Calu3 (cell line): ENCODE measurements at regions of chr2 and their contacts with region 1.

Region 1: DNA sequence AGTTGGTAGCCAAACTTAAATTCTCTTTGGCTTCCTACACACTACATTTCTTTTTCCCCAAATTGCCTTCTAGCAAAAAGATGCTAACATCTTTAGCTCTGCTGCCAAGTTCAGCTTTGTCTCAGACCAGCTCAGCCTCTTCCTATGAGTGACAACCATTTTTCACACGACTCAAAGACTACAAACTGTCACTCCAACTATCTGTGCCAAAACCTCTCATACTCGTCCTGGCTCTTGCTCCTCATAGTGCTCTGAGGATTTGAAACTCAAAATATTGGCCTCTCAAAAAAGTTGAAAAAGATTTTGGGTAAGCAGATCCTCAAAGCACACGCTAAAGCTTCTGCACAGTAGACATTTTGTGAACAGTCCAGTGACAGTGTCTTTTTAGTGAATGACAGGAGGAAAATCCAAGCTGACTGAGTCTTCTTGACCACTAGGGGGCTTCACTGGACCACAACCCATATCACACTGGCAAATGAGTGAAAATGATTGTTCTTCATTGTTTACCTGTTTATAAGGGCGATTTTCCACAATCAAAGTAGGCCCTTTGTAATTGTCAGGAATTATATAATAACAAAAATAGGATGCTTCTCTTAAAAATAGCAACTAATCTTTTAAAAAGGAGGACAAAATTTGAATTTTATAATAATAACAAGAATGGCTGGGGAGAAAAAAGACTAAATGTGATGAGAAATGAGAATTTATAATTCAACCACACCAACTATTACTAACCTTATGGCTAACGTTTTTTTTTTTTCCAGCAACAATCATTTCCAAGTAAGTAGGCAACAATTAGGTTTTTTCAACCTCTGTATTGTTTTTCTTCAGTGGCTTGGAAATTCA is 85.5 kb upstream of the PGAP1 start:
- DNase-seq: peak; percentile 24
- H3K4me3 Mint-ChIP-seq: no peak overlapping the region
- H3K27ac Mint-ChIP-seq: no peak overlapping the region
- H3K4me1 Mint-ChIP-seq: peaks cover 8% of the 10 kb centered on the region
- H3K27me3 Mint-ChIP-seq: no peaks in the 10 kb centered on the region
- CTCF ChIP-seq: peak; percentile 87

Region 2: GRCh38 chr2:196767101-196767500 is 244.9 kb before region 1 on chr2:
- CTCF ChIA-PET with region 1: no interaction called
- intact Hi-C with region 1: no loop called
- DNase-seq: no peak
- H3K4me3 Mint-ChIP-seq: no peak overlapping the region
- H3K27ac Mint-ChIP-seq: no peak overlapping the region
- H3K4me1 Mint-ChIP-seq: no peaks in the 10 kb centered on the region
- H3K27me3 Mint-ChIP-seq: no peaks in the 10 kb centered on the region
- CTCF ChIP-seq: no peak

Region 3: DNA sequence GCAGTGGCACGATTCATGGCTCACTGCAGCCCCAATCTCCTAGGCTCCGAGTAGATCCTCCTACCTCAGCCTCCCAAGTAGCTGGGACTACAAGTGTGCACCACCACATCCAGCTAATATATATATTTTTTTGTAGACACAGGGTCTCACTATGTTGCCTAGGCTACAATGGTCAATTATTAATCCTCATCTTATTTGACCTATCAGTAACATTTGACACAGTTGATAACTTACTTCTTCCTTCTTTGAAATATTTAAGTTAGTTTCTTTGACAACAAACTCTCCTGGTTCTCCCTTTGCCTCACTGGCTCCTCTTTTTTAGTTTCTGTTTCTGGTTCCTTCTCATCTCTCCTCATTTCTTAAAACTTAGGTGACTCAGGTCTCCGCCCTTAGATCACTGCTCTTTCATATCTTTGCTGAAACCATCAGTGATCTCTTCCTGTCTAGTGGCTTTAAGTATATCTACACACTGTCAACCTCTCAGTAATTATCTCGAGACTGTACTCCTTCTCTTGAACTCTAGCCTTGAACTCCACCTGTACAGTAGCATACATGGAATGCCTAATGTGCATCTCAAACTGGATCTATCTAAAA is 97.1 kb before region 1 on chr2:
- CTCF ChIA-PET with region 1: no interaction called
- intact Hi-C with region 1: no loop called
- DNase-seq: no peak
- H3K4me3 Mint-ChIP-seq: no peak overlapping the region
- H3K27ac Mint-ChIP-seq: no peak overlapping the region
- H3K4me1 Mint-ChIP-seq: peaks cover 12% of the 10 kb centered on the region
- H3K27me3 Mint-ChIP-seq: no peaks in the 10 kb centered on the region
- CTCF ChIP-seq: no peak

Region 4: GRCh38 chr2:197034292-197034691 is 22.3 kb after region 1 on chr2:
- CTCF ChIA-PET with region 1: no interaction called
- intact Hi-C with region 1: loop called (anchors 1 kb)
- DNase-seq: no peak
- H3K4me3 Mint-ChIP-seq: no peak overlapping the region
- H3K27ac Mint-ChIP-seq: no peak overlapping the region
- H3K4me1 Mint-ChIP-seq: no peaks in the 10 kb centered on the region
- H3K27me3 Mint-ChIP-seq: no peaks in the 10 kb centered on the region
- CTCF ChIP-seq: no peak